B cell (primary cell): ENCODE measurements at regions of chr12 and their contacts with region 1.

Region 1: GRCh38 chr12:3885277-3886094 is 12.3 kb upstream of the PARP11 start:
- DNase-seq: peak; percentile 72
- ATAC-seq: no peak
- H3K4me3 ChIP-seq: no peak overlapping the region
- H3K4me3 Mint-ChIP-seq: no peak overlapping the region
- H3K27ac ChIP-seq: no peak overlapping the region
- H3K27ac Mint-ChIP-seq: no peak overlapping the region
- H3K4me1 ChIP-seq: peaks cover 2 to 7% of the 10 kb centered on the region in 2 donors
- H3K4me1 Mint-ChIP-seq: peaks cover 4% of the 10 kb centered on the region
- H3K27me3 ChIP-seq: peaks cover 0 to 13% (median 6%) of the 10 kb centered on the region in 4 experiments
- H3K27me3 Mint-ChIP-seq: peaks cover 8% of the 10 kb centered on the region
- CTCF ChIP-seq: peak; percentile 88

Region 2: DNA sequence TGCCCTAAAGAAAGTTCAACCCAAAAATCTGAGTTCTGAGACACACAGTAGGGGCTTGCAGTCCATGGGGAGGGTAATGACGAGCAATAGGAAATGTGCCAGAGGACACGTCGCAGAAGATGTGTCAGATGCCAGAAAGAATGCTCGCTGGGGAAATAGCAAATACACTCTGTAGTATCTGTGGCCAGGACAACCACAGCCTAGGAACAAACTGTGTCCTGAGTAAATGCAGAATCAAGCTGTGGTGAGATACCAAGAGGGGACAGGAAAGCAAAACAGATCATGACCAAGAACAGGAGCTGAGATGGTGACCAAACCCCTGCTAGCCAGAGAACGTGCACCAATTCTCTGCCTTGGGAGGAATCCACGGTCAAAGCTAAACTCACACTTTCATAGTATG is 141.7 kb before region 1 on chr12:
- CTCF ChIA-PET with region 1: no interaction called
- POLR2A ChIA-PET with region 1: no interaction called
- intact Hi-C with region 1: no loop called
- DNase-seq: no peak
- ATAC-seq: no peak
- H3K4me3 ChIP-seq: no peak overlapping the region
- H3K4me3 Mint-ChIP-seq: no peak overlapping the region
- H3K27ac ChIP-seq: no peak overlapping the region
- H3K27ac Mint-ChIP-seq: no peak overlapping the region
- H3K4me1 ChIP-seq: no peaks in the 10 kb centered on the region
- H3K4me1 Mint-ChIP-seq: peaks cover 4% of the 10 kb centered on the region
- H3K27me3 ChIP-seq: no peaks in the 10 kb centered on the region
- H3K27me3 Mint-ChIP-seq: no peaks in the 10 kb centered on the region
- CTCF ChIP-seq: no peak

Region 3: DNA sequence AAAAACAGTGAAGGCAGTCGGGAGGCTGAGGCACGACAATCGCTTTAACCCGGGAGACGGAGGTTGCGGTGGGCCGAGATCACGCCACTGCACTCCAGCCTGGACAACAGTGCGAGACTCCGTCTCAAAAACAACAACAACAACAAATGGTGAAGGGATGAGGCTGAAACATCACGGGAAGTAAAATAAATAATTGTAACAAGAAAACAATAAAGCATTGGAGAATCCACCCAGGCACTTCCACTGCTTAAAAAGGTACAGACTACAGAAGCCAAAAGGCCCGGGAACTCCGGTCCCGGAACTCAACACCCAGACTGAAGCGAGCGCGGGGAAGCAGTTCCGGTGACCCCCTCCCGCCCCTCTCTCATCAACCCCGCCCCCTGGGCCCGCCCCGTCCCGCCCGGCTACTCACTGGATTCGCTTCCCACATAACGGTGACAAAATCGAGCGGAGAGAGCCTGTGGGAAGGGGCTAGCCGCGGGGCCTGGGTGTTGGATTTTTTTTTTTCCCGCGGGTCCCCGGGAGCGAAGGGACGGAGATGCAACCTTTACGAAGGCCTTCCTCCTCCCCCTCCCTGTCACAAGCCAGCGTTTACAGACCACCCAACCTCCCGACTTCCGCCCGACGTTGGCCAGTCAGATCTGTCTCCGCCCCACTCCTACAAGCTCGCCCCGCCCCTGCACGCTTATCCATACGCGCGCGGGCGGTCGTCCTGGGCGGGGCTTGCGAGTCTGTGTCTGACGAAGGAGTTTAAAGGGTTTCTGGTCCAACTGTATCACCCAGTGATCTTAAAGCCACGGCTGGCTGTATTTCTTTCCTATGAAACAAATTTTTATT is 12.5 kb before region 1 on chr12 and contains the start of gene PARP11:
- CTCF ChIA-PET with region 1: interaction called, 11 read pairs
- POLR2A ChIA-PET with region 1: no interaction called
- intact Hi-C with region 1: no loop called
- DNase-seq: peak; percentile 98
- ATAC-seq: peak; percentile 98
- H3K4me3 ChIP-seq: peak within 1 kb of the TSS; percentile 71 to 91 (median 75)
- H3K4me3 Mint-ChIP-seq: peak within 1 kb of the TSS; percentile 94
- H3K27ac ChIP-seq: peak within 1 kb of the TSS; percentile 90 to 93
- H3K27ac Mint-ChIP-seq: peak within 1 kb of the TSS; percentile 94
- H3K4me1 ChIP-seq: peaks cover 33 to 37% of the 10 kb centered on the region in 2 donors
- H3K4me1 Mint-ChIP-seq: peaks cover 46% of the 10 kb centered on the region
- H3K27me3 ChIP-seq: no peaks in the 10 kb centered on the region
- H3K27me3 Mint-ChIP-seq: peaks cover 5% of the 10 kb centered on the region
- CTCF ChIP-seq: no peak
- total RNA-seq, gene PARP11: 24.3 and 26.3 TPM in 2 replicates

Region 4: DNA sequence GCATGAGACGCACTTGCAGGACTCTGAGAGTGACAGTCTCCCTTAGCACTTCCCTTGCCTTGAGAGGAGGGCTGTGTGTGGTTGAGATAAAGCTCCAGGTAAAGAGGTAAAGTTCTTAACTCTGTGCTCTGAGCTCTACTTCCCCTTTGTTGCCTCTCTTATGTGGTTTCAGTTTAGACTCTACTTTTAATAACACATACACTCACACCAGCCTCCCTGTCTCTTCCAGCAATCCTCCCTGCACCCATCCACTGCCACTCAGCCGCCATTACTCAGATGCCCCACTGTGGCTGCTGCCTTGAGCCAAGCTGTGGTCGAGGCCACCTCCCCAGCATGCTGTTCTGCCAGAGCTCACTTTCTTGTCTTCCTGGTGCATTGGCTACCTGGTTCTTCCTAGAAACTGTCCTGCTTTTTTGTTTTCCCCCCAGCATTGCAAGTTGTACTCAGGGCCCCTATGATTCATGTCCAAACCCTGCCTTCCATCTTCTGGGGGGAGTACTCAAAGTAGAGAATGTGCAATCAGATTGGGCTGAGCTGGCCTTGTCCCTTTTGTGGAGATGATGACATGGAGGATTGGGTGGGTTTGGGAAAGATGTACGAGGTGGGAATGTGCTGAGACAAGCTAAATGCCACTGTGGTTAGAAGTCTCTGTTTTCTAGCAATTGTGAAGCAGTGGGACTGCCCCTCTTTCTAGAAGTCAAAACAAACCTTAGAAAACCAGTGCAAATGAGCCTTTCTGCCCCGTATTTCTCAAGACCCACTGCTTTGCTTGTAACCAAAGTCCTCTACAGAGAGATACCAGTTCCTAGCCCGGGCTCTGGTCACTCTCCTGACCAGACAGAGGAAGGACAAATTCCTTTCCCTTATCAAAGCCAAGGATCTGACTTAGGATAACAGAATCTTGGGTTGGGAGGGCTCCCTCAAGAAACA is 103.3 kb after region 1 on chr12:
- CTCF ChIA-PET with region 1: interaction called, 48 read pairs
- POLR2A ChIA-PET with region 1: interaction called, 4 read pairs
- intact Hi-C with region 1: no loop called
- DNase-seq: peak; percentile 57
- ATAC-seq: peak; percentile 76
- H3K4me3 ChIP-seq: peak overlapping the region in 1 of 5 experiments; percentile 6
- H3K4me3 Mint-ChIP-seq: peak overlapping the region; percentile 9
- H3K27ac ChIP-seq: peak overlapping the region in 1 of 2 donors; percentile 16
- H3K27ac Mint-ChIP-seq: peak overlapping the region; percentile 72
- H3K4me1 ChIP-seq: peaks cover 11% of the 10 kb centered on the region in 2 donors
- H3K4me1 Mint-ChIP-seq: peaks cover 16% of the 10 kb centered on the region
- H3K27me3 ChIP-seq: no peaks in the 10 kb centered on the region
- H3K27me3 Mint-ChIP-seq: peaks cover 6% of the 10 kb centered on the region
- CTCF ChIP-seq: no peak

Region 5: DNA sequence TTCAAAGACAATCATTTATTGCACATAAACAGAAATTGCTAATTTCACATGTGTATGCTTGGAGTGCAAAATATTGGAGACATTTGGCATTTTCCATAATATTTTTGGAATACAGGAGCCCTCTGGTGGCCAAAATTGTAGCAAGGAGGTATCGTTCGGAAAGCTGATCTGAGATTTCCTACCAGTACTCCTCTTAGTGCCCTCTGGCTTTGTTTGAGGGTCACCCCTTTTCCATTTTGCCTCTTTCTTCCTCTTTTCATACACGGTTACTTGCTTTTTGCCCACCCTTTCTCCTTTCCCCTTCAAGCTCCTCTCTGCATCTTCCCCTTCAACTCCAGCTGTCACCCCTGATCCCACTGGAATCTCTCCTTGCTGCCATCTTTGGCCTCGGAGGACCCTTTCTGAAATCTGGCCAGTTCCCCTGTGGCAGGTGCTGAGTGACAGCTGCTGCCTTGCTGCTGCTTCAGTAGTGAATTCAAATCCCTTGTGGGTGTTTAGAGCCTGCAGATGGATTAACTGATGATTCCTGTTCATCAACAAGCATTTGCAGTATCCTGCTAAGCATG is 152.3 kb after region 1 on chr12:
- CTCF ChIA-PET with region 1: interaction called, 45 read pairs
- POLR2A ChIA-PET with region 1: interaction called, 3 read pairs
- intact Hi-C with region 1: no loop called
- DNase-seq: no peak
- ATAC-seq: no peak
- H3K4me3 ChIP-seq: no peak overlapping the region
- H3K4me3 Mint-ChIP-seq: no peak overlapping the region
- H3K27ac ChIP-seq: no peak overlapping the region
- H3K27ac Mint-ChIP-seq: no peak overlapping the region
- H3K4me1 ChIP-seq: no peaks in the 10 kb centered on the region
- H3K4me1 Mint-ChIP-seq: no peaks in the 10 kb centered on the region
- H3K27me3 ChIP-seq: peaks cover 0 to 2% (median 0%) of the 10 kb centered on the region in 4 experiments
- H3K27me3 Mint-ChIP-seq: peaks cover 31% of the 10 kb centered on the region
- CTCF ChIP-seq: peak; percentile 29

Region 6: DNA sequence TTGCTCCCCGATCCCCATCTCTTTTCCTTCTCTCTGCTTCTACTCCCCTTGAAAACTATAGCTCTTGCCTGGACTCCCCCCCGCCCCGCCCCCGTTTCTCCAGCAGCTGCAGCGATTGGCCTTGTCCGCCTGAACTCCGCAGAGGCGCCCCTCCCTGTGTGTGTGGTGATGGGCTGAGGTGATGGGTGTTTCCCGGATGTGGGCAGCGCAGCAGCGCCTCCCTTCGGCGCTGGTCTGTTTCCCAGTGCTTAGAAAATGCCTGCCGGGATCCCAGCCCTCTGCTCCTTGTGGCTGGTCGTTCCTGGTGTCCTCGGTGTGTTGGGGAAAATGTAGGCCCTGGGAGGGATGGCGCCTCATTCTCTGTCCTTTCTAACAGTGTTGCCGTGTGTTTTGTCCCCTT is 878.1 kb after region 1 on chr12:
- CTCF ChIA-PET with region 1: interaction called, 17 read pairs
- POLR2A ChIA-PET with region 1: no interaction called
- intact Hi-C with region 1: loop called (anchors 5 kb)
- DNase-seq: no peak
- ATAC-seq: no peak
- H3K4me3 ChIP-seq: no peak overlapping the region
- H3K4me3 Mint-ChIP-seq: no peak overlapping the region
- H3K27ac ChIP-seq: no peak overlapping the region
- H3K27ac Mint-ChIP-seq: no peak overlapping the region
- H3K4me1 ChIP-seq: no peaks in the 10 kb centered on the region
- H3K4me1 Mint-ChIP-seq: peaks cover 2% of the 10 kb centered on the region
- H3K27me3 ChIP-seq: peaks cover 0 to 3% (median 0%) of the 10 kb centered on the region in 4 experiments
- H3K27me3 Mint-ChIP-seq: peaks cover 14% of the 10 kb centered on the region
- CTCF ChIP-seq: no peak

Region 7: GRCh38 chr12:5428332-5429221 is 1543.1 kb after region 1 on chr12:
- CTCF ChIA-PET with region 1: no interaction called
- POLR2A ChIA-PET with region 1: no interaction called
- intact Hi-C with region 1: no loop called
- DNase-seq: peak; percentile 52
- ATAC-seq: no peak
- H3K4me3 ChIP-seq: no peak overlapping the region
- H3K4me3 Mint-ChIP-seq: no peak overlapping the region
- H3K27ac ChIP-seq: no peak overlapping the region
- H3K27ac Mint-ChIP-seq: no peak overlapping the region
- H3K4me1 ChIP-seq: peaks cover 29 to 33% of the 10 kb centered on the region in 2 donors
- H3K4me1 Mint-ChIP-seq: peaks cover 20% of the 10 kb centered on the region
- H3K27me3 ChIP-seq: peaks cover 0 to 40% (median 29%) of the 10 kb centered on the region in 4 experiments
- H3K27me3 Mint-ChIP-seq: peaks cover 60% of the 10 kb centered on the region
- CTCF ChIP-seq: no peak